Naive thymus-derived CD4-positive, alpha-beta T cell (primary cell): ENCODE measurements at regions of chr9 and their contacts with region 1.

Region 1: DNA sequence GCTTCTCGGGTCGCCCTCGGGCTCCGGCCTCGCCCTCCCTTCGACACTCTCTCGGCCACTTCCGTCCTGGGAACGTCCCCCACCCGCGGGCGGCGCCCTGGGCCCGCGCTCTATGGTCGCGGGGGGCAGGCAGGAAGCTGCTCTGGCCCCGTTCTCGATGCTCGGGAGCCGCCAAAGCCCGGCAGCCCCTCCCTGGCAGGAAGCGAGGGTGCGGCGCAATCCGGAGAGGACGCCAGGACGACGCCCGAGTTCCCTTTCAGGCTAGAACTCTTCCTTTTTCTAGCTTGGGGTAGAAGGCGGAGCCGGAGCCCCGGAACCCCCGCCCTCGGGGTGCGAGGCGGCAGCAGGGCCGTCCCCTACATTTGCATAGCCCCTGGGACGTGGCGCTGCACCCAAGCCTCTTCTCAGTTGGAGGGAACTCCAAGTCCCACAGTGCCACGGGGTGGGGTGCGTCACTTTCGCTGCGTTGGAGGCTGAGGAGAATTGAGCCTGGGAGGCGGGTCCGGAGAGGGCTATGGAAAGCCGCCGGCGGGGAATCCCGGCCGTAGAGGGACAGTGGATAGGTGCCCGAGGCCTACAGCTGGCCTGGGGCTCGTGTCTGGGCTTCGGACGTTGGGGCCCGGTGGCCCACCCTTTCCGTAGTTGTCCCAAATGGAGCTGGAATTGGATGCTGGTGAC is at the starts of genes CREB3 and TLN1:
- DNase-seq: peak; percentile 86 to 98 (median 96)
- ATAC-seq: peak; percentile 94
- H3K4me3 ChIP-seq: peak within 1 kb of the TSS; percentile 98
- H3K4me3 Mint-ChIP-seq: peak within 1 kb of the TSS in 5 of 10 donors; percentile 87 to 97 (median 94)
- H3K27ac ChIP-seq: peak within 1 kb of the TSS; percentile 93
- H3K27ac Mint-ChIP-seq: peak within 1 kb of the TSS in 6 of 9 donors; percentile 80 to 96 (median 92)
- H3K4me1 ChIP-seq: peaks cover 56 to 60% of the 10 kb centered on the region in 2 donors
- H3K4me1 Mint-ChIP-seq: peaks cover 20 to 34% (median 22%) of the 10 kb centered on the region in 7 donors
- H3K27me3 ChIP-seq: no peaks in the 10 kb centered on the region
- H3K27me3 Mint-ChIP-seq: no peaks in the 10 kb centered on the region
- total RNA-seq, gene CREB3: 13.4 to 22.1 (median 20.9) TPM
- total RNA-seq, gene TLN1: 191 to 369 (median 241) TPM

Region 2: GRCh38 chr9:35079426-35080341 is 652.6 kb before region 1 on chr9 and contains the start of gene FANCG:
- CTCF ChIA-PET with region 1: no interaction called
- POLR2A ChIA-PET with region 1: no interaction called
- intact Hi-C with region 1: loop called in 1 of 2 experiments (anchors 1 kb)
- DNase-seq: peak; percentile 60 to 87 (median 73)
- ATAC-seq: peak; percentile 98
- H3K4me3 ChIP-seq: peak within 1 kb of the TSS; percentile 84
- H3K4me3 Mint-ChIP-seq: peak within 1 kb of the TSS; percentile 84 to 98 (median 94)
- H3K27ac ChIP-seq: peak within 1 kb of the TSS; percentile 74
- H3K27ac Mint-ChIP-seq: peak within 1 kb of the TSS; percentile 76 to 99 (median 91)
- H3K4me1 ChIP-seq: peaks cover 8 to 10% of the 10 kb centered on the region in 2 donors
- H3K4me1 Mint-ChIP-seq: peaks cover 13 to 38% (median 24%) of the 10 kb centered on the region in 7 donors
- H3K27me3 ChIP-seq: no peaks in the 10 kb centered on the region
- H3K27me3 Mint-ChIP-seq: no peaks in the 10 kb centered on the region
- total RNA-seq, gene FANCG: 19.6 to 84.9 (median 26.7) TPM

Region 3: DNA sequence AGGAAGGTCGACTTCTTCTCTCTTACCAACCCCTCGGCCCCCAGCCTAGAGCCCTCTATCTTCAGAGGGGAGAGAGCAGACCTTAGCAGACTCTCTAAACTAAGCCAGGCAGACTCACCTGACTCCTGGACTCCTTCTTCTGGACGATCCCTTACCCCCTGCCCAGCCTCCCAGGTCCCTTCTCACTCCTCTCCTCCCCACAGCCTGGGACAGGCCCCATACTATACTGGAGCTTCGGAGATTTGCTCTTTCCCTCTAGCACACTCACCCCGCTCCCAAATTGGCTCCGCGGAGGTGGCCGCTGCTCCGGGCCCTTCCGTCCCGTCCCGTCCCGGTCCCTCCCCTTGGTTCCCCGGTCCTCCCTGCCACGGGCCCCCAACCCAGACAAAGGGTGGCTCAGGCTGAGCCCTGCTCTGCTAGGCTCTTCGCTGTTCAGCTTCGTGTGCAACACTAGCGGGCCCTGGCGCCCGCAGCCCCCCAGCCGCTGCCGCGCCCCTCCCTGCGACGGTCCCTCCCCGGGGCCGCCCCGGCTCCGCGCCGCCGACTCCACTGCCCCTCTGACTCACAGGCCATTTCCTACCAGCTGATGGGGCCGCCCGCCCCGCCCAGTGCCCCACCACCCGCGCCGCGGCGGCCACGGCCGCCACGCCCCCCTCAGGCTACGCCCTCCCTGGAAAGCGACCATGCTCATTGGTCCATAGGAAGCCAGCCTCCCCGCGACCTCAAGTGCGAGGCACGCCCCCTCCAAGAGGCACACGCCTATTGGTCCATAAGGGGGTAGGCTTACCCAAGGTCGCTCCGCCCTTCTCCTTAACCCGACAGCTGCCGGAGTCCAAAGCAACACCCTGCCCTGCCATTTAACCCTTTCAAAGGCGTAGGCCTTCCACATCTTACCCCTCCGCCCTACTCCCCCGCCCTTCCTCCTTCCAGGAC is 621.0 kb before region 1 on chr9:
- CTCF ChIA-PET with region 1: no interaction called
- POLR2A ChIA-PET with region 1: no interaction called
- intact Hi-C with region 1: loop called (anchors 1 kb)
- DNase-seq: peak; percentile 77 to 96 (median 91)
- ATAC-seq: peak; percentile 86
- H3K4me3 ChIP-seq: peak overlapping the region; percentile 69
- H3K4me3 Mint-ChIP-seq: peak overlapping the region; percentile 55 to 87 (median 80)
- H3K27ac ChIP-seq: peak overlapping the region; percentile 71
- H3K27ac Mint-ChIP-seq: peak overlapping the region; percentile 62 to 94 (median 85)
- H3K4me1 ChIP-seq: peaks cover 36 to 37% of the 10 kb centered on the region in 2 donors
- H3K4me1 Mint-ChIP-seq: peaks cover 29 to 63% (median 58%) of the 10 kb centered on the region in 7 donors
- H3K27me3 ChIP-seq: no peaks in the 10 kb centered on the region
- H3K27me3 Mint-ChIP-seq: no peaks in the 10 kb centered on the region

Region 4: DNA sequence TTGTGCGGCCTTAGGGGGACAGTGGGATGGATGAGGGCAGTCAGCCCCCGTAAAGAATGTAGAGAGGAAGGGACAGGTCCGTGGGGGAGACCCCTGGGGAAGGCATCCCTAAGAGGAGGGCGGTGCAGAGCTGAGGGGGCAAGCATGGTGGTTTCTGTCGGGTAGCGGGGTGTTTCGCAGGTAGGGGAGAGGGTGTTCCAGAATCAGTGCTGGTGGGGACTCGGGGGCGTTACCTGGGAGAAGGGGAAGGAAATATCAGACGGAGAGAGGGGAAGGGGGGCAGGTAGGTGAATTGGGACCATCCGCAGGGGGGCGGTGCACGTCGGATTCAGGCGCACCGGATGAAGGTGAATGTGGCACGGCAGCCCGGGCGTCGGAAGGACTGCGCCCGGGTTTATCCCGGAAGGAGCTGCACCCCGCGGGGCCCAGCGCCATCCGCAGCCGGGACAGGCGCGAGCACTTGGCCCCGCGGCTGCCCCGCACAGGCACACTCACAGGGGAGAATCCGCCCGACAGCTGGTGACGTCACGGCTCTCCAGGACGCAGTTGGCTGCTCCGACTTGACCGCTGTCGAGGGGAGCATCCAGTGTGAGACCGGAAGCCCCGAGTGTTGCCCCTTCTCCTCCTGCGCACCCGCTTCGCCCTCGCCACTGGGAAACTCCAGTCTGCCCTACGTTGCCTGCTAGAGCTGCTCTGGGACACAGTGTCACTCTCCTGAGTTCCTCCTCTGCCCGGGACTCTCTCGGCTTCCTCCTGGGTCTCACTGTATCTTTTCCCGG is 115.4 kb before region 1 on chr9:
- CTCF ChIA-PET with region 1: interaction called, 15 read pairs
- POLR2A ChIA-PET with region 1: interaction called, 6 read pairs
- intact Hi-C with region 1: loop called (anchors 1 kb)
- DNase-seq: peak; percentile 46 to 71 (median 64)
- ATAC-seq: peak; percentile 80
- H3K4me3 ChIP-seq: peak overlapping the region; percentile 84
- H3K4me3 Mint-ChIP-seq: peak overlapping the region; percentile 82 to 89 (median 86)
- H3K27ac ChIP-seq: peak overlapping the region; percentile 71
- H3K27ac Mint-ChIP-seq: peak overlapping the region; percentile 84 to 93 (median 91)
- H3K4me1 ChIP-seq: peaks cover 27 to 36% of the 10 kb centered on the region in 2 donors
- H3K4me1 Mint-ChIP-seq: peaks cover 33 to 44% (median 38%) of the 10 kb centered on the region in 7 donors
- H3K27me3 ChIP-seq: no peaks in the 10 kb centered on the region
- H3K27me3 Mint-ChIP-seq: no peaks in the 10 kb centered on the region

Region 5: DNA sequence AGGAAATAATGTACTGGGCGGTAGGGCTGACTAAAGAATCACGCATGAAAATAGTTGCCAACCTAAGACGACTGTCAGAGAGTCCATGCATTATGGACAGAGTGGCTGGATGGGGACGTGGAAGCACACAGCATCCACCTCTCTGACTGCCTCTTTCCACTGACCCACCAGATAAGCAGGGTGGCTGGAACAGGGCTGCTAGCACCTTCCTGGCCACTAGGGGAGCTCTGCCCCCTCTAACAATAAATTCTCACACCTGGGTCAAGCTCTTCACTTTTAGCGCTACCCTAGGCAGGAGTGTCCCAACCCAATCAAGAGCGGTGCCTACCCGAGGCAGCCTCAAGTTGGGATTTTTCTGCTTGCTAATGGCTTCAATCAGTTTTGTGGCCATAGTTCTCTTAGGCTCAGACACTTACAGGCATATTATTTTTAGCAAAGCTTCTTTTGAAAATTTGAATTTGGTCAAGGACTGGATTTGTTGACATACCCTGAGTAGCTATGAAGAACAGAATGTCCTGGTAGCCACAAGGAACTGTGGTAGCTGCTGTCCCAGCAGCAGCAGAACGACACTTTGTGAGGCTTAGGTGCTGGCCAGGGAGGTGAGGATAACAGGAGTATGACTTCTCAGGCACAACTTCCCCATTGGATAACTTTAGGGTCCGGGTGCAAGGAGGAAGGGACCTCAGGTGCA is 35.6 kb before region 1 on chr9:
- CTCF ChIA-PET with region 1: interaction called, 50 read pairs
- POLR2A ChIA-PET with region 1: interaction called, 11 read pairs
- intact Hi-C with region 1: loop called in 1 of 2 experiments (anchors 2 kb)
- DNase-seq: peak in 8 of 9 donors; percentile 15 to 56 (median 41)
- ATAC-seq: peak; percentile 91
- H3K4me3 ChIP-seq: no peak overlapping the region
- H3K4me3 Mint-ChIP-seq: no peak overlapping the region
- H3K27ac ChIP-seq: no peak overlapping the region
- H3K27ac Mint-ChIP-seq: peak overlapping the region in 8 of 9 donors; percentile 33 to 85 (median 66)
- H3K4me1 ChIP-seq: peaks cover 0 to 10% of the 10 kb centered on the region in 2 donors
- H3K4me1 Mint-ChIP-seq: peaks cover 6 to 15% (median 12%) of the 10 kb centered on the region in 7 donors
- H3K27me3 ChIP-seq: no peaks in the 10 kb centered on the region
- H3K27me3 Mint-ChIP-seq: no peaks in the 10 kb centered on the region

Region 6: DNA sequence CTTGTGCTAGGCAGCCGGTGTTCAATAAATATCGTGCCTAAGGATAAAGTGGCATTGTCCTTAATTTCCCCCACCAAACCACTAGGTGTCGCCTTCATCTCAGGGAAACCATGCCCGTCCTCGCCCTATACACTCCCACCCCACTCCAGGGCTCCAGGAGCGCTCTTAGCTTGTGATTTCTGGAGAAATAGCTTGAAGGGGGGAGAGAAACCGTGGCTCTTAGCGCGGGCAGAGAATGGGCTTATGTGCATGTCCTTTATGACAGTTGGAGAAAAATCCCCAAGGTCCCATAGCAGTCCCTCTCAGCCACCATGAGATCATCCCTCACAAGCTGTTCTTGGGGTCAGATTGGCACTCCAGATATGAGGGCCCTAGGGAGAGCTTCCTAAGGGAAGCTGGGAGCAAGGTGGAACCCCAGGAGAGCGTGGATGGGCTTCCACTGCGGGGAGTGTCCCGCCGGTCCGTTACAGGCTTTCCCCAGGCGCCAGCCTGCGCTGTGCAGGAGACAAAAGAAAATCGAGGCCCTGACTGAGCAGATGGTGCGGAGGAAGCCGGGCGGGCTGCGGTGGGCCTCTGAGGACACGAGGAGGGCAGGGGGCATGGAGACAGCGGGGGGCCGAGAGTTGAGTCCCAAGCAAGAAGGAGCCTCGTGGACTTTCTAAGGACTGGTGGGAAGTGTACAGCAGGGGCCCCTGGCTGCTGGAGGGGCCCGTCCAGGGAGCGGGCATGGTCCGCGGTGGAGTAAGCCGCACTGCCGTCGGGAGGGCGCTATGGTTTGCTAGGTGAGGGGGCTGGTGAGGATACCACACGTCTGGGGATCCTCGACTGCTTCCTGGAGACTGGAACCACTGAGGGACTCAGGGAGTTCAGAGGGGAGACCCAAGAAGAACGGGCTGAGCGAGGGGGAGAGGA is 58.4 kb after region 1 on chr9:
- CTCF ChIA-PET with region 1: interaction called, 6 read pairs
- POLR2A ChIA-PET with region 1: no interaction called
- intact Hi-C with region 1: loop called in 1 of 2 experiments (anchors 1 kb)
- DNase-seq: peak; percentile 36 to 70 (median 62)
- ATAC-seq: peak; percentile 90
- H3K4me3 ChIP-seq: no peak overlapping the region
- H3K4me3 Mint-ChIP-seq: peak overlapping the region in 2 of 10 donors; percentile 31 to 58
- H3K27ac ChIP-seq: no peak overlapping the region
- H3K27ac Mint-ChIP-seq: no peak overlapping the region
- H3K4me1 ChIP-seq: no peaks in the 10 kb centered on the region
- H3K4me1 Mint-ChIP-seq: peaks cover 6 to 21% (median 10%) of the 10 kb centered on the region in 7 donors
- H3K27me3 ChIP-seq: no peaks in the 10 kb centered on the region
- H3K27me3 Mint-ChIP-seq: no peaks in the 10 kb centered on the region

Region 7: GRCh38 chr9:35882263-35882848 is 150.1 kb after region 1 on chr9:
- CTCF ChIA-PET with region 1: interaction called, 6 read pairs
- POLR2A ChIA-PET with region 1: no interaction called
- intact Hi-C with region 1: loop called (anchors 1 kb)
- DNase-seq: peak; percentile 54 to 83 (median 71)
- ATAC-seq: peak; percentile 72
- H3K4me3 ChIP-seq: no peak overlapping the region
- H3K4me3 Mint-ChIP-seq: peak overlapping the region in 1 of 10 donors; percentile 18
- H3K27ac ChIP-seq: no peak overlapping the region
- H3K27ac Mint-ChIP-seq: no peak overlapping the region
- H3K4me1 ChIP-seq: no peaks in the 10 kb centered on the region
- H3K4me1 Mint-ChIP-seq: peaks cover 0 to 2% (median 0%) of the 10 kb centered on the region in 7 donors
- H3K27me3 ChIP-seq: no peaks in the 10 kb centered on the region
- H3K27me3 Mint-ChIP-seq: peaks cover 0 to 45% (median 8%) of the 10 kb centered on the region in 5 donors